PC-9 (cell line): ENCODE measurements at regions of chr2 and their contacts with region 1.

Region 1: GRCh38 chr2:27370026-27370815 is at the starts of genes EIF2B4 and SNX17:
- DNase-seq: peak; percentile 97 to 99
- H3K4me3 ChIP-seq: peak within 1 kb of the TSS; percentile 94
- H3K27ac ChIP-seq: peak within 1 kb of the TSS; percentile 22; the same call in 1 of the 2 replicates
- H3K4me1 ChIP-seq: peaks cover 27% of the 10 kb centered on the region
- H3K27me3 ChIP-seq: no peaks in the 10 kb centered on the region
- CTCF ChIP-seq: peak; percentile 79
- total RNA-seq, gene EIF2B4: 32.9 and 33.1 TPM in 2 replicates
- total RNA-seq, gene SNX17: 60.6 and 73.7 TPM in 2 replicates

Region 2: GRCh38 chr2:27095745-27096651 is 274.2 kb before region 1 on chr2:
- CTCF ChIA-PET with region 1: no interaction called
- POLR2A ChIA-PET with region 1: no interaction called
- intact Hi-C with region 1: loop called (anchors 5 kb)
- DNase-seq: no peak
- H3K4me3 ChIP-seq: peak overlapping the region; percentile 39; the same call in 1 of the 2 replicates
- H3K27ac ChIP-seq: no peak overlapping the region
- H3K4me1 ChIP-seq: no peaks in the 10 kb centered on the region
- H3K27me3 ChIP-seq: no peaks in the 10 kb centered on the region
- CTCF ChIP-seq: no peak

Region 3: DNA sequence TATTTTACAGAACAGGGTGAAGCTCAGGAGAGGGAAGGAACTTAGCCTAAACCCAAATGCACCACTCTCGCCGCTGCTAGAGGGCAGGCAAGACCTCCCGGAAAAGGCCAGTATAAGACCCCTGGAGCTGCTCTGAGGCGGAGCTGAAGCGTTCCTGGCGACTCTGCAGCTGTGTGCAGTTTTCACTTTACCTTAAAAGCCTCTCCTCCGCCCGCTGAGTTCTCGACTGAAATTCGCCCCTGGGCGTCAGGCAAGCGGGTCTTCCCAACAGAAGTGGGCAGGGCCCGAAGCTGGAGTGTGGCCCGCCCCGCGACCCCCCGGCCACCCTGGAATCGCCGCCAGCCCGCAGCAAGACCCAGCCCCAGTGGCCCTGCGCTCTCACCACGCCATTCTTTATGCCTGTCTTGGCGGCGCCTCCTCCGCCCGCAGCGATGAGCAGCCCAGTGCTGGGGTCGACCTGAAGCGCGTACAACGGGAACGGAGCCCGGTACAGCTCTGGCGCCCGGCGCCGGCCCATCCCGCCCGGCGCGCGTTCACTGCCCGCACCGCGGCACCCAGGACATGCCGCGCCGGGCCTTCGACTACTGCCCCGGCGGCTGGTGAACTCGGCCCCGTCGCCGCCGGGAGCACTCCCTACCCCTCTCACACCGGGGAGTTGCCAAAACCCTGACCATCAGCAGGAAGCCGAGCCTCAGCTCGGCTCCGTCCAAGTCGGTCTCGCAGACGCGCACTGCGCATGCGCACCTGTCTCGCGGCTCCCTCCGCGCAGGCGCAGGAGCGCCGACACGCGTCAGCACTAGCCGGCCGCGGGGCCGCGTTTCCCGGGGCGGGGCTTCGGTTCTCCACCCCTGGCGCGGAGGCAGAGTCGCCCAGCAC is 236.1 kb before region 1 on chr2 and contains the start of gene PREB:
- CTCF ChIA-PET with region 1: no interaction called
- POLR2A ChIA-PET with region 1: interaction called, 33 read pairs
- intact Hi-C with region 1: no loop called
- DNase-seq: peak; percentile 88 to 99
- H3K4me3 ChIP-seq: peak within 1 kb of the TSS; percentile 83
- H3K27ac ChIP-seq: peak within 1 kb of the TSS; percentile 12; the same call in 1 of the 2 replicates
- H3K4me1 ChIP-seq: peaks cover 10% of the 10 kb centered on the region
- H3K27me3 ChIP-seq: no peaks in the 10 kb centered on the region
- CTCF ChIP-seq: no peak; the same call in 1 of the 2 replicates
- total RNA-seq, gene PREB: 35.7 and 36.2 TPM in 2 replicates

Region 4: GRCh38 chr2:27356382-27357181 is 13.6 kb before region 1 on chr2 and contains the start of gene GTF3C2:
- CTCF ChIA-PET with region 1: interaction called, 5 read pairs
- POLR2A ChIA-PET with region 1: interaction called, 6 read pairs
- intact Hi-C with region 1: loop called (anchors 1 kb)
- DNase-seq: peak; percentile 91 to 95
- H3K4me3 ChIP-seq: peak within 1 kb of the TSS; percentile 69
- H3K27ac ChIP-seq: peak within 1 kb of the TSS; percentile 90
- H3K4me1 ChIP-seq: peaks cover 31% of the 10 kb centered on the region
- H3K27me3 ChIP-seq: no peaks in the 10 kb centered on the region
- CTCF ChIP-seq: no peak
- total RNA-seq, gene GTF3C2: 57.5 and 69.8 TPM in 2 replicates

Region 5: DNA sequence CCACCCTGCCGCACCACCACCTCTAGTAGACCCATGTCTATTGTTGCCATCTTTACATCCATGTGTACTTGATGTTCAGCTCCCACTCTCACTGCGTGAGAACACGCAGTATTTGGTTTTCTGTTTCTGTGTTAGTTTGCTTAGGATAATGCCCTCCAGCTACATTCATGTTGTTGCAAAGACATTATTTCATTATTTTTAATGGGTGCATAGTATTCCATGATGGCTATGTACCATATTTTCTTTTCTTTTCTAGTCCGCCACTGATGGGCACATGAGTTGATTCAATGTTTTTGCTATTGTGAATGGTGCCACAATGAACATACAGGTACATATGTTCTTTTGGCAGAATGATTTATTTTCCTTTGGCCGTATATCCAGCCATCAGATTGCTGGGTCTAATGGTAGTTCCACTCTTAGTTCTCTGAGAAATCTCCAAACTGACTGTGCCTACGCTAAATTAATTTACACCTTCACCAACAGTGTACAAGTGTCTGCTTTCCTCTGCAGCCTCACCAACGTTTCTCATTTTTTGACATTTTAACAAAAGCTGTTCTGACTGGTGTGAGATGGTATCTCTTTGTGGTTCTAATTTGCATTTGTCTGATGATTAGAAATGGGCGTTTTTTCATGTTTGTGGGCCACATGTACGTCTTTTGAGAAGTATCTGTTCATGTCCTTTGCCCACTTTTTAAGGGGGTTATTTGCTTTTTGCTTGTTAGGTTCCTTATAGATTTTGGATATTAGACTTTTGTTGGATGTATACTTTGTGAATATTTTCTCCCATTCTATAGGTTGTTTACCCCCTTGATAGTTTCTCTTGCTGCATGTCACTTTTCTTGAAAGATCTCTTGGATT is 20.8 kb after region 1 on chr2:
- CTCF ChIA-PET with region 1: no interaction called
- POLR2A ChIA-PET with region 1: no interaction called
- intact Hi-C with region 1: no loop called
- DNase-seq: no peak
- H3K4me3 ChIP-seq: no peak overlapping the region
- H3K27ac ChIP-seq: no peak overlapping the region
- H3K4me1 ChIP-seq: no peaks in the 10 kb centered on the region
- H3K27me3 ChIP-seq: no peaks in the 10 kb centered on the region
- CTCF ChIP-seq: no peak

Region 6: GRCh38 chr2:27428213-27428977 is 58.2 kb after region 1 on chr2 and contains the start of gene NRBP1:
- CTCF ChIA-PET with region 1: no interaction called
- POLR2A ChIA-PET with region 1: no interaction called
- intact Hi-C with region 1: loop called (anchors 5 kb)
- DNase-seq: peak; percentile 77 to 90
- H3K4me3 ChIP-seq: peak within 1 kb of the TSS; percentile 64
- H3K27ac ChIP-seq: peak within 1 kb of the TSS; percentile 64
- H3K4me1 ChIP-seq: peaks cover 27% of the 10 kb centered on the region
- H3K27me3 ChIP-seq: no peaks in the 10 kb centered on the region
- CTCF ChIP-seq: no peak
- total RNA-seq, gene NRBP1: 67.9 and 83.9 TPM in 2 replicates

Region 7: GRCh38 chr2:27461118-27461517 is 90.9 kb after region 1 on chr2:
- CTCF ChIA-PET with region 1: no interaction called
- POLR2A ChIA-PET with region 1: no interaction called
- intact Hi-C with region 1: no loop called
- DNase-seq: no peak
- H3K4me3 ChIP-seq: no peak overlapping the region
- H3K27ac ChIP-seq: no peak overlapping the region
- H3K4me1 ChIP-seq: no peaks in the 10 kb centered on the region
- H3K27me3 ChIP-seq: no peaks in the 10 kb centered on the region
- CTCF ChIP-seq: no peak